Posterior vena cava (tissue), 2 donors: ENCODE measurements at regions of chr15 and their contacts with region 1.

Region 1: GRCh38 chr15:70097337-70098169 is at the start of gene TLE3:
- DNase-seq: peak; percentile 100
- total RNA-seq, gene TLE3: 45.5 to 50.9 TPM

Region 2: GRCh38 chr15:69265347-69265955 is 832.1 kb before region 1 on chr15:
- intact Hi-C with region 1: loop called in 1 of 2 experiments (anchors 5 kb)
- DNase-seq: no peak

Region 3: DNA sequence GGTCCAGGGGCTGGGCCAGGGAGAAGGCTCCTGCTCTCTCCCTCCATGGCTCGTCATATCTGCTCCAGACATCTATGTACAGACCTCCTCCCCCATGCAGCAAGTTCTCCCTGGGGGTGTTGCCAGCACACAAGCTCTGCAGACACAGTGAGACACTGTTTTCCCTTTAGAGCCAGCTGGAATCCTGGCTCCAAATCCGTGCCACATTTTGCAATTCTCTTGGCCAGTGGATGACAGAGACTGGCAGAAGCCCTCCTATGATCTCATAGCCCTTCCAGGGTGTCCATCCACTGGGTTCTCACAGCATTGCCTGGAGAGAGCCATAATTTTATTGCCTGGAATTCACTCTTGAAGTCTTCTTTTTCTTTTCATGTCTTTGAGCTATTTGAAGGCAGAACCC is 203.7 kb before region 1 on chr15:
- intact Hi-C with region 1: loop called in 1 of 2 experiments (anchors 5 kb)
- DNase-seq: peak; percentile 88

Region 4: GRCh38 chr15:70062321-70062956 is 35.1 kb before region 1 on chr15:
- intact Hi-C with region 1: loop called in 1 of 2 experiments (anchors 5 kb)
- DNase-seq: peak; percentile 88